ENCODE measurements at regions of chr6 and their contacts with region 1.

Region 1: DNA sequence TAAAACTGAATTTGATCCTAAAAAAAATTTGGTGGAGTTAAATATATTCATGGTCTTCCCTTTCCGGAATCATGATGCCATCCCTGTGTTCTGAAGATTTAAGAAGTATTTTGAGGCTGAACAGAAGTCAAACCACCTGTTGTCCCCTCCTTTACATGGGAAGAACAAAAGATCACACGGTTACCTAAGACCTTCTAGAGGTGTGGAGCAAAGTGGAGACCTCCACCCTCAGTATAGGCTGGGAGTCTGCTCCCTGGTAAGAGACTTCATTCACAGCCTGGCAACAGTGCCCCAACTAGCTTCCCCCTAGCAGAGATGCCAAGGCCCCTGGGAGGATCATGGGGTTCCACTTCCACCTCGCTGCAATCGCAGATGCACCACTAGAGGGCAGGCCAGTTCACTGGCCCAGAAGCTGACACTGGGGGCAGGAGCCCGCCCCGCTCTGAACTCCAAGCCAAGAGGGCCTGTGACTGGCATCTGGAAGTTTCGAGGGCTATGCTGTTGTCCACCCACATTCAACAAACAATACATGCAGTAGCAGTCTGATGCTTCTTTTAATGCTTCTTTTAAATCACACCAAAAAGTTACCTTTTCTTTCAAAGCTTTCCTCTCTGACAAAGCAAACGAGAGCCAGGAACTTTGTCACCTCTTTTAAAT is 19.5 kb upstream of the UBE2J1 start:
- DNase-seq: peak; percentile 42 to 69 (median 54)
- H3K4me3 ChIP-seq: no peak overlapping the region
- H3K27ac ChIP-seq: no peak overlapping the region
- H3K4me1 ChIP-seq: peaks cover 1% of the 10 kb centered on the region
- H3K27me3 ChIP-seq: no peaks in the 10 kb centered on the region
- CTCF ChIP-seq: peak; percentile 25 to 54 (median 44)
- EP300 ChIP-seq: no peak
- POLR2A ChIP-seq: no peak

Region 2: DNA sequence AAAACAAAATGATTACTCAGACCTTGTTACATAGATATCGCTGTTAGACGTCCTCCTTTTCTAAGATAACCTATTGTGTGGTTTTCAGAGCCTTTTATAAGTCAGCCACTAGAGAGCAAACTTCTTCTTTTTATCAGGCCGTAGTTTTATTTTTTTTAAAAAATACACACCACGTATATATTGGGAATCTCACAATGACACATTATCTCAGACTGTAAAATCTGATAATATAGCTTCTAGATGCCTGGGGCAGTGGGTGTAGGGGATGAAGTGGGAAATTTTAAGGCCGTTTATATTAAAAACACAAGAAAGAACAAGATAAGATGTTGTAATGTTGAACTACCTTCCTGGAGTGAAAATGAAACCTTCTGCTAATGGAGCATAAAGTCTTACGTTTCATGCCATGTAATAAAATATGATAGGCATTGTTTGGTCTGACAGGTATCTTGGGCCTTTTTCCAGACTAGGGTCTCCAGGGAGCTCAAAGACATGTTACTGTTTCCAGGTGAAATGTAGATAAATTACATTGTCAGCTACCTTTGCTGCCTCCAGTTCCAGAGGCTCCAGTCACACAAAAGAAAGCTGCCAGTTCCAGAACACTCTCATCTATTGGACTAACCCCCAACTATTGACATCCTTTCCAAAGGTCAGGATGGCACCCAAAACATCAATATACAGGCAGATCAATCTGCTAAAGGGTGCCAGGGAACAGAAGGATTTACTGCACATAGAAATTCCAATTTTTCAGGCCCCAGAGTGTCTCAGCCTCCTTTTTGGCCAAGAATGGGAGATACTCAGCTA is 1539.8 kb before region 1 on chr6:
- intact Hi-C with region 1: loop called in 1 of 4 experiments (anchors 10 kb)
- DNase-seq: no peak
- H3K4me3 ChIP-seq: peak overlapping the region; percentile 33
- H3K27ac ChIP-seq: peak overlapping the region in 1 of 2 donors; percentile 0
- H3K4me1 ChIP-seq: no peaks in the 10 kb centered on the region
- H3K27me3 ChIP-seq: no peaks in the 10 kb centered on the region
- CTCF ChIP-seq: peak in 1 of 3 donors; percentile 22
- EP300 ChIP-seq: no peak
- POLR2A ChIP-seq: no peak

Region 3: DNA sequence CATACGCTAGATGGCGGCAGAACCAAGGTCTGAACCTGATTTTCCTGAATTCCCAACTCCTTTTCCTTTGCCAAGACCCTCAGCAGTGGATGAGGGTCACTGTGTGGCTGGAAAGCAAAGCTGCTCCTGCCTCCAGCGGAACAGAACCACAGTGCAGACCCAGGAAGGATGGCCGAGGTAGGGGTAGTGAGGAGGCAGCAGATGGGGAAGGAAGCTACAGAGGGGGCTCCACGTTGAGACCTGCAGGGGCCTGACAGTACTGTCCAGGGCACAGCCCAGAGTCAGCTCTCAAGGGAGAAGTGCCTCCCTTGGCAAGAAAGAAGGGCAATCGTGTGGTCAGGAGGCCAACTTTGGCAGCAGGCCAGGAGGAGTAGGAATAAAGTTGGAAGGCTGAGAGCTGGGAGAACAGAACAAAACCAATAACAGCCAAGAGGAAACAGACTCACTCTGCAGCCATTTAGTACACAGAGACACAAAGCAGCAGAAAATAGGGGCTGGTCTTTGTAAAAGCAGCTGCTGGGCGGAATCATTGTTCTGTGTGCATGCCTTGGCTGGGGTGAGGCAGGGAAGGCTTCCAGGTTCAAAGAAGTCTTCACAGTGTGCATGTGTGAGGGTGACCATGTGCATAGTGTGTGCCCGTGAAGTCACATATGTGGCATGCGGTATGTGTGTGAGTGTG is 60.0 kb before region 1 on chr6:
- intact Hi-C with region 1: loop called in 1 of 4 experiments (anchors 10 kb)
- DNase-seq: peak; percentile 48 to 69 (median 58)
- H3K4me3 ChIP-seq: no peak overlapping the region
- H3K27ac ChIP-seq: no peak overlapping the region
- H3K4me1 ChIP-seq: no peaks in the 10 kb centered on the region
- H3K27me3 ChIP-seq: no peaks in the 10 kb centered on the region
- CTCF ChIP-seq: peak in 2 of 3 donors; percentile 47 to 57
- EP300 ChIP-seq: no peak
- POLR2A ChIP-seq: no peak

Measured in ovary (tissue), 10 donors.